ENCODE measurements at regions of chr4 and their contacts with region 1.

Region 1: GRCh38 chr4:119628308-119629141 is at the start of gene PDE5A:
- DNase-seq: peak; percentile 67 to 81
- H3K4me3 ChIP-seq: peak within 1 kb of the TSS; percentile 68
- H3K27ac ChIP-seq: peak within 1 kb of the TSS; percentile 37; the same call in 1 of the 2 replicates
- H3K4me1 ChIP-seq: peaks cover 24% of the 10 kb centered on the region
- H3K27me3 ChIP-seq: no peaks in the 10 kb centered on the region
- CTCF ChIP-seq: peak; percentile 67
- total RNA-seq, gene PDE5A: 7.9 and 8.5 TPM in 2 replicates

Region 2: DNA sequence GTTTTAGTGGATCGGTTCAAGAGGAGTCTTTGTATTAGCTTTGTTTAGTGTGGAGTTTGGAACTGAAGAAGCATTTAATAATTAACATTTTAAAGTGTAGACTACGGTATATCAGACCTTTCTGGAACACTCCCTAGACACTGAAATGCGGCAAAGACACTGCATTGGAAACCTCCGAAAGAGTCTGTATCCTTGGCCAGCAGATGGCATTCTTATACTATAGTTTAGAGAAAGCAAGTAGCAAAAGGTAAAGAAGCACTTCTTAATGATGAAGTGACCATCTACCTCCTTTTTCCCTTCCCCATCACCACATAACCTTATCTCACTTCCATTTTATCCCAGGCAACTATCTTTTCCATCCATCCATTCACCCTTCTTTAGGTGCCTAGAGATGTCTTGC is 314.2 kb before region 1 on chr4:
- CTCF ChIA-PET with region 1: no interaction called
- POLR2A ChIA-PET with region 1: no interaction called
- intact Hi-C with region 1: loop called (anchors 5 kb)
- DNase-seq: no peak
- H3K4me3 ChIP-seq: no peak overlapping the region
- H3K27ac ChIP-seq: no peak overlapping the region
- H3K4me1 ChIP-seq: no peaks in the 10 kb centered on the region
- H3K27me3 ChIP-seq: no peaks in the 10 kb centered on the region
- CTCF ChIP-seq: peak; percentile 43

Region 3: GRCh38 chr4:119659616-119660015 is 31.1 kb after region 1 on chr4:
- CTCF ChIA-PET with region 1: interaction called, 4 read pairs
- POLR2A ChIA-PET with region 1: interaction called, 10 read pairs
- intact Hi-C with region 1: no loop called
- DNase-seq: peak in 1 of 2 experiments; percentile 39
- H3K4me3 ChIP-seq: no peak overlapping the region
- H3K27ac ChIP-seq: no peak overlapping the region
- H3K4me1 ChIP-seq: peaks cover 14% of the 10 kb centered on the region
- H3K27me3 ChIP-seq: no peaks in the 10 kb centered on the region
- CTCF ChIP-seq: no peak

Region 4: DNA sequence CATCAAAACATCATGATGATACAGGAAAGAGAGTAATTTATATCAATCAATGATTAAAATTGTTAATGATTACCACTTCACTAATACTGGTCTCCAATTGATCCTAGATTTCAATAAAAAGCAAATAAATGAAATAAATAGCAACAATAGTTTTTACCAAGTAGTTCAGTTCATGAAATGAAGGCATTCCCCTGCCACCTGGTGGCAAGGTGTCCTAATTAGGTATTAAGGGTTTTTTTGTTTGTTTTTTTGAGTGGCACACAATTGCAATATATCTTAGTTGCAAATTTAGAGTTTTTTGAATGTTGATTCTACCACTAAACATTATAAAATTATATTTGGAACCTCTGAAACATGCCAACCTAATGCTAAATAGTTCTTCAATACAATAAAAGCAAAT is 157.4 kb after region 1 on chr4:
- CTCF ChIA-PET with region 1: no interaction called
- POLR2A ChIA-PET with region 1: no interaction called
- intact Hi-C with region 1: loop called (anchors 1 kb)
- DNase-seq: peak; percentile 25 to 38
- H3K4me3 ChIP-seq: no peak overlapping the region
- H3K27ac ChIP-seq: no peak overlapping the region
- H3K4me1 ChIP-seq: no peaks in the 10 kb centered on the region
- H3K27me3 ChIP-seq: no peaks in the 10 kb centered on the region
- CTCF ChIP-seq: peak; percentile 71